Adrenal gland (tissue), 19 donors: ENCODE measurements at regions of chr11 and their contacts with region 1.

Region 1: GRCh38 chr11:119373921-119374631 is 7.4 kb downstream of the USP2 start:
- DNase-seq: peak; percentile 74 to 90 (median 83)
- H3K4me3 ChIP-seq: no peak overlapping the region
- H3K27ac ChIP-seq: peak overlapping the region; percentile 8 to 92 (median 88)
- H3K4me1 ChIP-seq: peaks cover 43 to 60% of the 10 kb centered on the region in 2 donors
- H3K27me3 ChIP-seq: no peaks in the 10 kb centered on the region
- CTCF ChIP-seq: peak; percentile 75 to 91 (median 87)
- POLR2A ChIP-seq: no peak

Region 2: GRCh38 chr11:119339589-119340343 is 34.3 kb before region 1 on chr11:
- intact Hi-C with region 1: loop called in 1 of 2 experiments (anchors 5 kb)
- DNase-seq: peak in 5 of 7 donors; percentile 69 to 78 (median 73)
- H3K4me3 ChIP-seq: peak overlapping the region in 2 of 4 donors; percentile 45 to 72
- H3K27ac ChIP-seq: peak overlapping the region in 4 of 5 donors; percentile 42 to 87 (median 74)
- H3K4me1 ChIP-seq: peaks cover 23 to 49% of the 10 kb centered on the region in 2 donors
- H3K27me3 ChIP-seq: no peaks in the 10 kb centered on the region
- CTCF ChIP-seq: peak; percentile 58 to 89 (median 76)
- POLR2A ChIP-seq: no peak

Region 3: GRCh38 chr11:119356349-119357031 is 17.6 kb before region 1 on chr11:
- intact Hi-C with region 1: loop called in 1 of 2 experiments (anchors 2 kb)
- DNase-seq: peak; percentile 77 to 91 (median 88)
- H3K4me3 ChIP-seq: peak overlapping the region in 2 of 4 donors; percentile 44 to 56
- H3K27ac ChIP-seq: peak overlapping the region in 3 of 5 donors; percentile 59 to 72 (median 70)
- H3K4me1 ChIP-seq: peaks cover 8 to 9% of the 10 kb centered on the region in 2 donors
- H3K27me3 ChIP-seq: no peaks in the 10 kb centered on the region
- CTCF ChIP-seq: peak; percentile 80 to 97 (median 95)
- POLR2A ChIP-seq: no peak

Region 4: GRCh38 chr11:119474682-119475596 is 100.9 kb after region 1 on chr11:
- intact Hi-C with region 1: loop called in 1 of 2 experiments (anchors 5 kb)
- DNase-seq: peak; percentile 72 to 94 (median 89)
- H3K4me3 ChIP-seq: no peak overlapping the region
- H3K27ac ChIP-seq: peak overlapping the region; percentile 42 to 88 (median 68)
- H3K4me1 ChIP-seq: peaks cover 5 to 8% of the 10 kb centered on the region in 2 donors
- H3K27me3 ChIP-seq: no peaks in the 10 kb centered on the region
- CTCF ChIP-seq: peak; percentile 89 to 97 (median 92)
- POLR2A ChIP-seq: no peak

Region 5: GRCh38 chr11:119491753-119492510 is 117.9 kb after region 1 on chr11:
- intact Hi-C with region 1: no loop called
- DNase-seq: no peak
- H3K4me3 ChIP-seq: no peak overlapping the region
- H3K27ac ChIP-seq: no peak overlapping the region
- H3K4me1 ChIP-seq: no peaks in the 10 kb centered on the region
- H3K27me3 ChIP-seq: no peaks in the 10 kb centered on the region
- CTCF ChIP-seq: peak in 2 of 6 experiments; percentile 13 to 25
- POLR2A ChIP-seq: no peak